GM13976 (cell line): ENCODE measurements at regions of chr11 and their contacts with region 1.

Region 1: DNA sequence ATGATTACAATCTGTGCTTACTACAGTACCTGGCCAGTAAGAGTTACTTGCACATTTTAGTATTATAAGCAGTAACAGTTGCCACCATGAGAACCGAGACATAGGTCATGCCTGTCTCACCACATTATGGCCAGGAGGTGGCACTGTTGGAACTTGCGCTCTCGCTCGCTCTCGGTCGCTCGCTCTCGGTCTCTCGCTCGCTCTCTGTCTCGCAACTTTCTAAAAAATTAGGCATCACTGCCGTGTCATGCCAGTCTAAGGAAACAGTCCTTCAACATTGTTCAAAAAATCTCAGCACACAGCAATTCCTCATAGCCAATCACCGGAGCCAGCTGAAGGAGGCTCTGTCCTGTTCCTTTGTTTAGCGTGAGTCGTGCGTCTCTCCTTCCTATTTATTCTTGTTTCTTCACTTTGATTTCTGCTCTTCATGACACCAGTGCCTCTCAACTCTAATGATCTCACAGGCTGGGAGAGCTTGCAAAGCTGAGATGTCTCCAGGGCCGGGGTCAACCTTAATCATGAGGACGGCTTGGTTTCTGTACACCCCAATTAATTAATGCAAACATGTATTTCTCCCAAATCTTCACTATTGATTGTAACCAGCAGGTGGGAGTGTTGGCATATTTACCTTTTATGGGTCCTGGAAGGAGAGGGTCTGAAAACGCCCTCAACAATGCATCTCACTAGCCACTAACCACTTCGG is 6.3 kb upstream of the ADAMTS8 start:
- DNase-seq: peak; percentile 69
- CTCF ChIP-seq: peak; percentile 88

Region 2: DNA sequence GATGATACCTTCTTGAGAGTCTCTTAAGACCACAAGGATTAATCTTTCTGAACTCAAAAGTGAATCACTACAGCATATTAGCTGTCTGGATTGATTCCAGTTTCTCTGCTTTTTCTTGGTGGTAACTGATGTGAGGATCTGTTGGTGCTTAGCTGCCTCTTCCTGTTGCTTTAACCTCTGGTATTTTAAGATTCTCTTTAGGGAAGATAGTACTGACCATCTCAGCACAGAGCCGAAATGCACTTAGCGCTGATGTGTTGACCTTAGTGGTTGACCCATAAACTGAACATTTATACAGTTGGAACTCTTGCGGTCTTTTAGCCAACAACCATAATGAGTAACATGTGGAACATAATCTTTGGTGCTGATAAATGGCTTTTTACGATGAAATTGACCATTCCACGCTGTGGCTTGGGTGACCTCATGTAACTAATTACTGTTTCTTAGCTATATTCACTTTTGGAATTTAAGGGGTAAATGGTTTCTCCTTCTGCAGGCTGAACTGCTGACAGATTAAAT is 331.3 kb before region 1 on chr11:
- in situ Hi-C with region 1: no loop called
- DNase-seq: no peak
- CTCF ChIP-seq: no peak

Region 3: DNA sequence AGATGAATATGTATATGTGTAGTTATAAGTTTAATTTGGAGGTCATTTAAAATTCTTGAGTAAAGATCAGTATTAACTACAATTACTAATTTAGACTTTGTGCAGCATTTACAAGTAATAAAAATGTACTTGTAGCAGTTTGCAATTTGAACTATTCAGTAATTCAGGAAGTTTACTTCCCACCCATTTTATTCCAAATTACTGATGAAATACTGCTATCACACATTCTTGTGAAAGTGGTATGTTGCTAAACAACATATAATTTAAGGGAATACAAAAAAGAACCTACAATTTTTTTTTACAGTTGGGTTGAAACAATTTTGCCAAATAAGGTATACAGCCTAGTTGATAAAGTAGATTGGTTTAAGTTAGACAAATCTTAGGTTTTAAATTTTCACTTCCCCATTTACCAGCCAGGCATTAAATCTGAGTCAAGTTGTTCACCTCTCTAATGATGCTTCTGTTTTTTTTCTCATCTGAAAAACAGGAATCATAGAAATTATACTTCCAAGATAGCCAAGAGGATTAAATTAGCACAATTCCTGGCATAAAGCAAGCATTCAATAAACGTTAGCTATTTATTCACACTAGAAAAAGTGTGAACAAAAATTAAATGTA is 165.2 kb before region 1 on chr11:
- in situ Hi-C with region 1: no loop called
- DNase-seq: peak; percentile 49
- CTCF ChIP-seq: no peak

Region 4: GRCh38 chr11:130499828-130500227 is 65.2 kb after region 1 on chr11:
- in situ Hi-C with region 1: no loop called
- DNase-seq: no peak
- CTCF ChIP-seq: no peak

Region 5: GRCh38 chr11:130861902-130862860 is 427.5 kb after region 1 on chr11:
- in situ Hi-C with region 1: loop called (anchors 10 kb)
- DNase-seq: peak; percentile 85
- CTCF ChIP-seq: peak; percentile 100